Activated B cell treated with CpG ODN at 0.5 μM for 24 hours (primary cell): ENCODE measurements at regions of chr19 and their contacts with region 1.

Region 1: DNA sequence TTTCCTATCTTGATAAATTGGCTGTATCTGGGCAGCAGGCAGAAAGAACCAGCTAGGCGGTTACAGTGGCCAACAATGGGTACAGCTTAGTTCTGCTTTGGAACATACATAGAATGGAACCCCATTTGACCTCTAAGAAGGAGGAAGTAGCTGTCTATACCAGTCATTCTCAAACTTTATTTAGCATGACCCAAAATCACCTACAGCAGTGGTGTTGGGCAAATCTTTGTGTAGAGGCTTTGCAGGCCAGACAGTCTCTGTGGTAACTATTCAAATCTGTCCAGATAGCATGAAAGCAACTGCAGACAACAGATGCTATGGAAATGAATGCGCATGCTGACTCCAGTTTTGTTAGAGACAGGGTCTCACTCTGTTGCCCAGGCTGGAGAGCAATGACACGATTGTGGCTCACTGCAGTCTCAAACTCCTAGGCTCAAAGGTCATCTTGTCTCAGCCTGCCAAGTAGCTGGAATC is 12.0 kb upstream of the KCNC3 start:
- DNase-seq: no peak
- ATAC-seq: peak; percentile 65
- H3K4me3 Mint-ChIP-seq: peak overlapping the region; percentile 81
- H3K27ac Mint-ChIP-seq: peak overlapping the region; percentile 92
- H3K4me1 Mint-ChIP-seq: peaks cover 81% of the 10 kb centered on the region
- H3K27me3 Mint-ChIP-seq: no peaks in the 10 kb centered on the region
- CTCF ChIP-seq: no peak

Region 2: GRCh38 chr19:49997709-49998108 is 343.4 kb before region 1 on chr19:
- CTCF ChIA-PET with region 1: no interaction called
- POLR2A ChIA-PET with region 1: no interaction called
- intact Hi-C with region 1: no loop called
- DNase-seq: no peak
- ATAC-seq: peak; percentile 58
- H3K4me3 Mint-ChIP-seq: no peak overlapping the region
- H3K27ac Mint-ChIP-seq: no peak overlapping the region
- H3K4me1 Mint-ChIP-seq: no peaks in the 10 kb centered on the region
- H3K27me3 Mint-ChIP-seq: no peaks in the 10 kb centered on the region
- CTCF ChIP-seq: no peak

Region 3: GRCh38 chr19:50362656-50363424 is 21.7 kb after region 1 on chr19:
- CTCF ChIA-PET with region 1: interaction called, 26 read pairs
- POLR2A ChIA-PET with region 1: interaction called, 84 read pairs
- intact Hi-C with region 1: no loop called
- DNase-seq: no peak
- ATAC-seq: no peak
- H3K4me3 Mint-ChIP-seq: no peak overlapping the region
- H3K27ac Mint-ChIP-seq: no peak overlapping the region
- H3K4me1 Mint-ChIP-seq: peaks cover 70% of the 10 kb centered on the region
- H3K27me3 Mint-ChIP-seq: no peaks in the 10 kb centered on the region
- CTCF ChIP-seq: no peak

Region 4: GRCh38 chr19:50376166-50377050 is 35.3 kb after region 1 on chr19 and contains the start of gene NR1H2:
- CTCF ChIA-PET with region 1: no interaction called
- POLR2A ChIA-PET with region 1: interaction called, 7 read pairs
- intact Hi-C with region 1: loop called (anchors 5 kb)
- DNase-seq: peak; percentile 90
- ATAC-seq: peak; percentile 88
- H3K4me3 Mint-ChIP-seq: peak within 1 kb of the TSS; percentile 99
- H3K27ac Mint-ChIP-seq: peak within 1 kb of the TSS; percentile 99
- H3K4me1 Mint-ChIP-seq: peaks cover 14% of the 10 kb centered on the region
- H3K27me3 Mint-ChIP-seq: no peaks in the 10 kb centered on the region
- CTCF ChIP-seq: no peak
- total RNA-seq, gene NR1H2: 66.9 and 79.5 TPM in 2 replicates

Region 5: GRCh38 chr19:50402544-50403301 is 61.6 kb after region 1 on chr19:
- CTCF ChIA-PET with region 1: no interaction called
- POLR2A ChIA-PET with region 1: no interaction called
- intact Hi-C with region 1: no loop called
- DNase-seq: no peak
- ATAC-seq: no peak
- H3K4me3 Mint-ChIP-seq: no peak overlapping the region
- H3K27ac Mint-ChIP-seq: no peak overlapping the region
- H3K4me1 Mint-ChIP-seq: no peaks in the 10 kb centered on the region
- H3K27me3 Mint-ChIP-seq: no peaks in the 10 kb centered on the region
- CTCF ChIP-seq: no peak

Region 6: DNA sequence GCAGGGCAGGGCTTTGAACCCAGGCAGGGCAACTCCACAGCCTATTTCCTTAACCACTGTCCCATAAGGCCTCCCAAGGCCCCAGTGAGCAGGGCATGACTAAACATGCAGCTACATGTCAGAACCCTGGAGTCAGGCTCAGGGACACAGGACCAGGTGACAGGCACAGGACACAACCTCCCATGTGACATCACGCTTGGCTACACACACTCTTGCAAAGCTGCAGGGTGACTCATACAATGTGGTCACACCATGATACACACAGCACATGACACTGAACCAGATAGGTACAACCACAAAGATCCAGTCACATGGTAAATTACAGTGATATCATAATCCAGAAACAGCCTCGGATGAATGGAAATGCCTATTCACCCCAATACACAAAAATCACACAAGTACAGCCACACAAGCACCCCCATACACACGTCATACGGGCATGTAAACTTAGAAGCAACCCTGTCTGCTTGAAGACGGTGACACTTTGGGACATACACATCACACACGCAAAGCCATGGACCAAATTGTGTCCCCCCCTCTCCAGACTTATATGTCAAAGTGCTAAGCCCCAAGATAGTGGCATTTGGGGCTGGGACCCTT is 555.6 kb after region 1 on chr19:
- CTCF ChIA-PET with region 1: no interaction called
- POLR2A ChIA-PET with region 1: no interaction called
- intact Hi-C with region 1: loop called (anchors 5 kb)
- DNase-seq: peak; percentile 58
- ATAC-seq: peak; percentile 91
- H3K4me3 Mint-ChIP-seq: peak overlapping the region; percentile 24
- H3K27ac Mint-ChIP-seq: peak overlapping the region; percentile 85
- H3K4me1 Mint-ChIP-seq: peaks cover 51% of the 10 kb centered on the region
- H3K27me3 Mint-ChIP-seq: no peaks in the 10 kb centered on the region
- CTCF ChIP-seq: no peak

Region 7: DNA sequence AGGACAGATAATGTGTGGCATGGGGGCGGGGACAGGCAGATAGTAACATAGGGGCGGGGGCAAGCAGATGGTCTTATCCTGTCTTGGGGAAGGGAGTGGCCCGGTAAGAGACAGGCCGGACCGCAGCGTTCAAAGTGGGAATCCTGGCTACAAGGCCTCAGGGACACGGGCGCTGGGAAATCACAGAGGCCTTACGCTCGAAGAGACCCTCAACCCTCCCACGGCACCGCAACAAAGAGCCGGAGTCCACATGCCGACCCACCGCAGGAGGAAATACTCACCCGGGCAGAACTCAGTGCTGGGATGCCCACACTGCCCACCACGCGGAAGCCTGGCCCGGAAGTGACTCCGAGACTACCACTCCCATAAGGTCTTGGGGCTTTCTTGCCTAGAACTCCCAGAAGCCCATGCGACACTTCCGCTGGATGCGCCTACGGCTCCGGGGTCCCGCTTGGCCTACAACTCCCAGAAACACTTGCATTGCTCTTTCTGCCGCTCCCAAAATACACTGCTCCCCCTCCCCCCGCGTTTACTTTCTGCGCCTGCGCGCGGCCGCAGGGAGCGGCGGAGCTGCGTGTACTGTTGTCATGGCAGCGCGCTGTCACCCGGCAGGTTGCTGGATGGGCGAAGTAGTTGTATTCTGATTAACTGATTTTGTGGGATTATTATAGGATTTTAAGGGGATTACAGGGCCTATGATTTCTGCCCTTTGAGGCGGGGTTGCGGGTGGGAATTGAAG is 767.1 kb after region 1 on chr19 and contains the start of gene CTU1:
- CTCF ChIA-PET with region 1: no interaction called
- POLR2A ChIA-PET with region 1: no interaction called
- intact Hi-C with region 1: loop called (anchors 10 kb)
- DNase-seq: peak; percentile 93
- ATAC-seq: peak; percentile 97
- H3K4me3 Mint-ChIP-seq: peak within 1 kb of the TSS; percentile 93
- H3K27ac Mint-ChIP-seq: peak within 1 kb of the TSS; percentile 96
- H3K4me1 Mint-ChIP-seq: peaks cover 29% of the 10 kb centered on the region
- H3K27me3 Mint-ChIP-seq: peaks cover 2% of the 10 kb centered on the region
- CTCF ChIP-seq: no peak
- total RNA-seq, gene CTU1: 7.8 and 8.9 TPM in 2 replicates